ENCODE measurements at regions of chr4 and their contacts with region 1.

Region 1: GRCh38 chr4:102826890-102827673 is at the start of gene UBE2D3:
- DNase-seq: peak; percentile 75
- CTCF ChIP-seq: peak; percentile 20

Region 2: GRCh38 chr4:102809190-102809589 is 17.9 kb before region 1 on chr4:
- CTCF ChIA-PET with region 1: interaction called, 10 read pairs
- POLR2A ChIA-PET with region 1: interaction called, 14 read pairs
- DNase-seq: no peak
- CTCF ChIP-seq: no peak

Region 3: DNA sequence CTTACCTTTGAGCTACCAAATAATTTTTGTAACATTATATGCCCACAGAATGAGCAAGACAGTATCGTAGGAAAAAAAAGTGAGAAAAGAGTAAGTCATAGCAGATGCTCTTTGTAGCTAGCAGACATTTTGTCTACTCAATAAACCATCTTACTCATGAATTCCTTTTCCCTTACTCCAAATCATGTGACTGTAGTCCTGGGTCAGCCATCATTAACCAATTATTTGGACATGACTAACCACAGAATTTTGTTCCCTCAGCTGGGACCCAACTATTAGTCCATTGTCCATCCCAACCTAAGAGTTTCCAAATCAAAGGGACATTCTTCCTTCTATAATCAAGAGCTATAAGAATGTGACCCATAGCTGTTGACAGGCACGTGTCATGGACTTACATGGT is 11.1 kb before region 1 on chr4:
- CTCF ChIA-PET with region 1: interaction called, 7 read pairs
- POLR2A ChIA-PET with region 1: interaction called, 25 read pairs
- DNase-seq: no peak
- CTCF ChIP-seq: no peak

Region 4: GRCh38 chr4:102868781-102869568 is 41.9 kb after region 1 on chr4 and contains the start of gene CISD2:
- CTCF ChIA-PET with region 1: interaction called, 13 read pairs
- POLR2A ChIA-PET with region 1: interaction called, 49 read pairs
- DNase-seq: peak; percentile 91
- CTCF ChIP-seq: no peak

Measured in GM10248 (cell line).